MCF 10A (cell line): ENCODE measurements at regions of chr3 and their contacts with region 1.

Region 1: GRCh38 chr3:139111392-139112229 is 66.9 kb upstream of the PRR23C start:
- DNase-seq: peak; percentile 62
- H3K4me3 Mint-ChIP-seq: no peak overlapping the region
- H3K27ac Mint-ChIP-seq: no peak overlapping the region
- H3K4me1 Mint-ChIP-seq: peaks cover 7% of the 10 kb centered on the region
- H3K27me3 Mint-ChIP-seq: no peaks in the 10 kb centered on the region
- CTCF ChIP-seq: peak; percentile 73

Region 2: DNA sequence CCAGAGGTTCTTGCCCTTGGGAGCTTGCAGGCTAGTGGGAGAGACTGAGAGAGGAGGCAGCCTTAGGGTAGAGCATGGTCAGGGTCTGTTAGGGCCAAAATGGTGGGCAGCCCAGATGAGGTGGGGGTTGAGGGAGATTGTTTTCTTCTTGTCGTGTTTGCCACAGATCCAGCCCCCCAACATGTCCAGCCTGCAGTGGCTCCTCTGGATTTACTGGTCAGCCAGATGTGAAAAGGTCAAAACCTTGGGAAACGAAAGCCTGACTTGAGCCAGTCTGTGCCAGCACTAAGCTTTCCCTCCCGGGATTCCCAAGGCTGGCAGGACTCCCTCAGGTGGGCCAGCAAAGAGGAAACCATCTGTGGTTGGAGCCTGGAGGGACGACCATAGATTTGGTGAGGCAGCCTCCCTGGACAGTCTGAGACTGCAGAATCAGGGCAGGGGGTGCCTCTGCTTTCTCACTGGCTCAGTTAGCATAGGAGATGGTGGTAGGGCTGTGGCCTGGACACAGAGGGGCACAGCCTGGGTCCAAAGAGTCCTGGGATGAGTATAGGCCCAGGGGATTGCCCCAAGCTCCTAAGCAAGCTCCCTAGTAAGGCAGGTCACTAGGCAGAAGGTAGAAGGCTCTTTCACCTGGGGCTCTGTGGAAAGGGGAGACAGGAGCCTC is 15.7 kb before region 1 on chr3:
- CTCF ChIA-PET with region 1: interaction called, 74 read pairs
- POLR2A ChIA-PET with region 1: interaction called, 3 read pairs
- intact Hi-C with region 1: no loop called
- DNase-seq: no peak
- H3K4me3 Mint-ChIP-seq: no peak overlapping the region
- H3K27ac Mint-ChIP-seq: no peak overlapping the region
- H3K4me1 Mint-ChIP-seq: no peaks in the 10 kb centered on the region
- H3K27me3 Mint-ChIP-seq: peaks cover 15% of the 10 kb centered on the region
- CTCF ChIP-seq: no peak

Region 3: DNA sequence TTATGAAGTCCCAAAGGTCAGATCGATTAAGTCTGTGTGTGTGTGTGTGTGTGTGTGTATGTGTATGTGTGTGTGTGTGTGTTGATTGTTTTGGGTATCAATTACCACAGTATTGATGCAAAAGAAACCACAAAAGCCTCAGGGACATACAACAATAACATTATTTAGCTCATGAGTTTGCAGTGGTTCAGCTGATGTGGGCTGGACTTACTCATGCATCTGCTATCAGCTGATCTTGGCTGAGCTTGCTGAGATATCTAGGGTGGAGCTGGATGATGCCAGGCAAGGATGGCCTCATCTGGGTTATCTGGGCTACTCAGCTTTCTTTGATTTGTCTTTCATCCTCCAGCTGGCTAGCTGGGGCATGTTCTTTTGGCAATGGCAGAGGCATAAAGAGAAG is 15.5 kb after region 1 on chr3:
- CTCF ChIA-PET with region 1: interaction called, 36 read pairs
- POLR2A ChIA-PET with region 1: interaction called, 3 read pairs
- intact Hi-C with region 1: no loop called
- DNase-seq: no peak
- H3K4me3 Mint-ChIP-seq: no peak overlapping the region
- H3K27ac Mint-ChIP-seq: no peak overlapping the region
- H3K4me1 Mint-ChIP-seq: peaks cover 6% of the 10 kb centered on the region
- H3K27me3 Mint-ChIP-seq: peaks cover 8% of the 10 kb centered on the region
- CTCF ChIP-seq: no peak

Region 4: DNA sequence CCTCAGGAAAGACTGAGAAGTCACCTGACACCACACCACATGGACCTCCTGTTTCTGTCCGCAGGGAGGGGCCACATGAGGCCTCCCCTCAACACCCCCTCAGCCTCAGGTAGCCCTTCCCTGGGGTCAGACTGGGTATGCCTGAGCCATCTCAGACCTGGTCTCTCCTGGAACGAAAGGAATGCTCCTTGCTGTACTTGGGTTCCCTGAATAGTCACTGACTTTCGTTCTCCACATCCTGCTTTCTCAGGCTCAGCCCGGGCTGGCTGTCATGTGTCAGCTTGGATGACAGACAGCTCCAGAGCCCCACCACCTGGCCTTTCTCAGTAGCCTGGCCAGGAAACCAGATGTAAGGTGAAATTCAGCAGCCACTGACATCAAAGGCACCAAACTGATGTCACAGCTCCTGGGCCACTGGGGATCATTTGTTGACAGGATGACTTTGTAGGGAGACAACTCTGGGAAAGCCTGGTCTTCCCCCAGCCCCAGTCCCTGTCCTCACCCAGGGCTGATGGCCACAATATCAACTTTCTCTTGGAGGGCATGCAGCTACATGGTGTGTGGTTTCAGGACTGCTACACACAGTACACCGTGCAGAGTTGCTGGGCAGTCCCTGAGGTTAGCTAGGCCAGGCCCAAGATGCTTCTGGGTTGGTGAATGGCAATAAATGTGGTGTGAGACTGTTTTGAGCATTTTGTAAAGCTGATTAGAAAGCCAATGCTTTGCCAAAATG is 90.8 kb after region 1 on chr3:
- CTCF ChIA-PET with region 1: interaction called, 6 read pairs
- POLR2A ChIA-PET with region 1: no interaction called
- intact Hi-C with region 1: loop called (anchors 5 kb)
- DNase-seq: peak; percentile 54
- H3K4me3 Mint-ChIP-seq: no peak overlapping the region
- H3K27ac Mint-ChIP-seq: no peak overlapping the region
- H3K4me1 Mint-ChIP-seq: peaks cover 6% of the 10 kb centered on the region
- H3K27me3 Mint-ChIP-seq: no peaks in the 10 kb centered on the region
- CTCF ChIP-seq: peak; percentile 21

Region 5: DNA sequence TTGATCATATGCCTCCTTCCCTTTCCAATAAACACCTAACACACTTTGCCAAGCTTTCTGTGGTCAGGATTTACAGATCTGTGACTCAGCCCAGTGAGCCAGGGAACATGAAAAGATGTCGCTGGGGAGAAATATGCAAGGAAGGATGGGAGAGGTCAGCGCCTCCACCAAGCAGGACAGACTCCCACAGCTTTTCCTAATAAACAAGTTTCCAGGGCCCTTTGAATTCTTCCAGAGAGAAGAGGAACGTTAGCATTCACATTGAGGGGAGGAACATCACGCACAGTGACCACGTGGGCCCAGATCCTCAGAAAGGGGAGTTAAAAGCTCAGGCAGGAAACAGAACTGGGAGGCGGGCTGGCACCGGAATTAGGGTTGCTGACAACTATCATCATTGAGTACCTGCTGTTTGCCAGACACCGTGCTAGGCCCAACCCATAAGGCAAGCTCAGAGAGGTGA is 198.9 kb after region 1 on chr3:
- CTCF ChIA-PET with region 1: interaction called, 56 read pairs
- POLR2A ChIA-PET with region 1: no interaction called
- intact Hi-C with region 1: no loop called
- DNase-seq: peak; percentile 83
- H3K4me3 Mint-ChIP-seq: peak overlapping the region; percentile 46
- H3K27ac Mint-ChIP-seq: peak overlapping the region; percentile 54
- H3K4me1 Mint-ChIP-seq: peaks cover 38% of the 10 kb centered on the region
- H3K27me3 Mint-ChIP-seq: no peaks in the 10 kb centered on the region
- CTCF ChIP-seq: no peak

Region 6: GRCh38 chr3:139329345-139329850 is 217.8 kb after region 1 on chr3:
- CTCF ChIA-PET with region 1: interaction called, 152 read pairs
- POLR2A ChIA-PET with region 1: interaction called, 7 read pairs
- intact Hi-C with region 1: loop called (anchors 2 kb)
- DNase-seq: peak; percentile 87
- H3K4me3 Mint-ChIP-seq: no peak overlapping the region
- H3K27ac Mint-ChIP-seq: no peak overlapping the region
- H3K4me1 Mint-ChIP-seq: peaks cover 8% of the 10 kb centered on the region
- H3K27me3 Mint-ChIP-seq: peaks cover 41% of the 10 kb centered on the region
- CTCF ChIP-seq: peak; percentile 99